B cell (primary cell): ENCODE measurements at regions of chr2 and their contacts with region 1.

Region 1: DNA sequence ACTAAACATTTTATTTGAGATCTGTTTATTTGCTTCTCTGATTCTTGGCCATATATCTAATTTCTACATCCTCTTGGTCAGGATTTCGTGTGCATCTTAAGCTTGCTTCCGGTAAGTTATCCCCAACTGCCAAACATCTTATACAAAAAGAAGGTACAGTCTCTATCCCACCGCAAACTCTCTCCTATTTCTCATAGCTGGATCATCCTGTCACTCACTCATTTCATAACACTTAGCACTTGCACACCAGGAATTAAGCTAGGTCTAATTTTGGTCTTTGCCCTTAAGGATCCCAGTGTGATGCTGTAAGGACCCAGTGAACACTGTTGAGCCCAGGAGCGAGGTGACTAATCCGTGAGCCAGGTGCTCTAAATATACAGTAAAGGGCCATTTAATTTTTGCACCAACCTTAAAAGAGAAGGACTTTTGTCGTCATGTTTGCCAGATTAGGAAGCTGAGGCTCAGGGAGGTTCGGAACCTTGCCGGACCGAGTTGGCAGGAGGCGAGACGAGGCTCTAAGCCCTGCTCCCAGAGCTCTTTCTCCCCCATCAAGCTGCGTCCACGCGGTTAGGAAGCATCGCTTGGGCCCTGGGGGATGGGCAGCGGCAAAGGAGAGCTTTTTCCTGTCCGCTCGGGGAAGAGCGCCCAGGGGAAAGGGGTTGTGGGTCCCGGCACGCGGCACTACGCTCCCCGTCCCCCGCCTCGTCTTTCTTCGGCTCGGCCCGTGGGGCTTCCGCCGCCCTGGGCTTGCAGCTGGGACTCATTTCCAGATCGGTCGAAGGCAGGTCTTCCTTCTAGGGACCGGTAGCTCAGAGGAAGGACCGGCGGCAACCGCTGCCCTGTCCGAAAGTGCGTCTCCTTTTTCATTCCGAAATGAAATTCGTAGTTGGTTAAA is 4.1 kb upstream of the ITPRIPL1 start:
- DNase-seq: no peak
- ATAC-seq: peak; percentile 9
- H3K4me3 ChIP-seq: peak overlapping the region; percentile 76 to 97 (median 79)
- H3K4me3 Mint-ChIP-seq: peak overlapping the region; percentile 87
- H3K27ac ChIP-seq: peak overlapping the region; percentile 34 to 68
- H3K27ac Mint-ChIP-seq: peak overlapping the region; percentile 84
- H3K4me1 ChIP-seq: peaks cover 33 to 43% of the 10 kb centered on the region in 2 donors
- H3K4me1 Mint-ChIP-seq: peaks cover 49% of the 10 kb centered on the region
- H3K27me3 ChIP-seq: no peaks in the 10 kb centered on the region
- H3K27me3 Mint-ChIP-seq: no peaks in the 10 kb centered on the region
- CTCF ChIP-seq: no peak

Region 2: DNA sequence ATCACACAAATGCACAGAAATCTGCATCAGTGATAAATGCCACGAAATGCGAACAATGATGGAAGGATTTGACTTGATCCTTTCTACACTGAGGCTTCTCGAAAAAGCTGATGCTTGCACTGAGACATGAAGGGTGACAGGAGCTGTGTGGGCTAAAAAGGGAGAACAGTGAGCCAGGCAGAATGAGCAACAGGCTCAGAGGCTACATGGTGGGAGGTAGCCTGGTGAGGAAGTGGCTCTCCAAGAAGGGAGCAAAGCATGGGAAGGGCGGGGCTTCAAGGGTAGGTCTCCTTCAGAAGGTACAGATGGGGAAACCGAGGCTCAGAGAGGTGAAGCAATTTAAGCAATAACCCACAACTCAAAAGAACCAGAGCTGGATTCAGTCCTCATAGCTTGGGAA is 646.8 kb before region 1 on chr2:
- CTCF ChIA-PET with region 1: no interaction called
- POLR2A ChIA-PET with region 1: no interaction called
- intact Hi-C with region 1: no loop called
- DNase-seq: no peak
- ATAC-seq: no peak
- H3K4me3 ChIP-seq: no peak overlapping the region
- H3K4me3 Mint-ChIP-seq: no peak overlapping the region
- H3K27ac ChIP-seq: no peak overlapping the region
- H3K27ac Mint-ChIP-seq: no peak overlapping the region
- H3K4me1 ChIP-seq: peaks cover 4 to 15% of the 10 kb centered on the region in 2 donors
- H3K4me1 Mint-ChIP-seq: peaks cover 12% of the 10 kb centered on the region
- H3K27me3 ChIP-seq: peaks cover 0 to 4% (median 2%) of the 10 kb centered on the region in 4 experiments
- H3K27me3 Mint-ChIP-seq: peaks cover 23% of the 10 kb centered on the region
- CTCF ChIP-seq: no peak

Region 3: GRCh38 chr2:96336104-96336775 is 15.3 kb after region 1 on chr2:
- CTCF ChIA-PET with region 1: interaction called, 22 read pairs
- POLR2A ChIA-PET with region 1: interaction called, 28 read pairs
- intact Hi-C with region 1: loop called (anchors 1 kb)
- DNase-seq: no peak
- ATAC-seq: no peak
- H3K4me3 ChIP-seq: peak overlapping the region; percentile 15 to 78 (median 61)
- H3K4me3 Mint-ChIP-seq: peak overlapping the region; percentile 71
- H3K27ac ChIP-seq: peak overlapping the region in 1 of 2 donors; percentile 92
- H3K27ac Mint-ChIP-seq: peak overlapping the region; percentile 69
- H3K4me1 ChIP-seq: peaks cover 14 to 22% of the 10 kb centered on the region in 2 donors
- H3K4me1 Mint-ChIP-seq: peaks cover 33% of the 10 kb centered on the region
- H3K27me3 ChIP-seq: no peaks in the 10 kb centered on the region
- H3K27me3 Mint-ChIP-seq: no peaks in the 10 kb centered on the region
- CTCF ChIP-seq: no peak

Region 4: DNA sequence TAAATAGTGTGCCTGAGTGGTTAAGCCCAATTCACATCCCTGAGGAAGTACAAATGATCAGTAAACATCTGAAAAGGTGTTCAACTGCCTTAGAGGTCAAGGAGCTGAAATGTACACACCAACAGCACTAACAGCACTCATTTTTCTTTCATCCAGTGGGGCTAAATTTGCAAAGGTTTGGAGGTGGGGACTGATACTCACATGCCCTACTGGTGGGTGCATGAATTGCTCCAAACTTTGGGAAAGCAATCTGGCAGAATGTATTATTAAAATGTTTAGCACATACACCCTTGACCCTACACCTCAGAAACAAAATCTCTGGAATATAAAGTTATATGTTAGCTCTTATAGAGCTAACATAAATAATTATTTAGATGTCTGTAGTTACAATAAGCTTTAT is 684.4 kb after region 1 on chr2:
- CTCF ChIA-PET with region 1: no interaction called
- POLR2A ChIA-PET with region 1: no interaction called
- intact Hi-C with region 1: no loop called
- DNase-seq: no peak
- ATAC-seq: no peak
- H3K4me3 ChIP-seq: no peak overlapping the region
- H3K4me3 Mint-ChIP-seq: no peak overlapping the region
- H3K27ac ChIP-seq: no peak overlapping the region
- H3K27ac Mint-ChIP-seq: no peak overlapping the region
- H3K4me1 ChIP-seq: no peaks in the 10 kb centered on the region
- H3K4me1 Mint-ChIP-seq: no peaks in the 10 kb centered on the region
- H3K27me3 ChIP-seq: no peaks in the 10 kb centered on the region
- H3K27me3 Mint-ChIP-seq: peaks cover 21% of the 10 kb centered on the region
- CTCF ChIP-seq: peak; percentile 26